Activated CD8-positive, alpha-beta T cell treated with anti-CD3 and anti-CD28 coated beads for 36 hours (primary cell): ENCODE measurements at regions of chr20 and their contacts with region 1.

Region 1: DNA sequence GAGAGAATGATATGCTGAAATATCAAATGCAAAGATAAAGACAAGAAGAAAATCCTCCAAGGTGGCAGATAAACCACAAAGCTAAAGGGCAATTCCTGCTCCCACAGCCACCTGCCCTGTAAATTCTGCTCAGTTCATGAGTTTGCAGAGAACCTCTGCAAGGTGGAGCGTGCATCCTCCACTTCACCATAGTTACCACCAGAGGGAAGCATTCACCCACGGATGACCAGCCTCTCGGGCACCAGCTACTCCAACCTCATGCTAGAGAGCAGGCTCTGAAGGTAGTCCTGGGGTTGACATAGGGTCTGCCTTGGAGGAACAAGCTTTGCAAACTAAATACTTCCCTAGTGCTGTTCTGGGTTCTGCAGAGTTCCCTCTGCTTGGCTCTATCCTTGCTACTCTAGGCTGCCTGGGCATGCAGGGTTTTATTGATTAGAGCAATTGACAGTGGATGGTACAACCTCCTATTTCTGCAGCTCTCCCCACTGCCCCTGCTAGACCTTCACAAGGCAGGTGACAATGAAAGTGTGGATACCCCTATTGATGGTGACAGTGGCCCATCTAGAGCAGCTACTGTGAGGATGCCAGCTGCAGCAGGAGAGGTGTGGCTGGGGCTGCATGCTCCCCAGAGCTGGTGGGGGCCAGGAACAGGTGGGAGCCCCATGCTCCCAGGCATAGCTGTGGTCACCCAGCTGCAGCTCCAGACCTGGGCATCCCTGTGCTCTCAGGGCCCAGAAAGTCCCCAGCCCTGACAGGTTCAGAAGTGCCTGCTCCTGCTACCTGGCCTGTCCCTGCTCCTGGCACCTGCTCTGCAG is 51.1 kb downstream of the GGTLC1 start:
- DNase-seq: peak; percentile 69
- ATAC-seq: peak; percentile 87
- H3K4me3 Mint-ChIP-seq: no peak overlapping the region
- H3K27ac Mint-ChIP-seq: no peak overlapping the region
- H3K4me1 Mint-ChIP-seq: no peaks in the 10 kb centered on the region
- H3K27me3 Mint-ChIP-seq: no peaks in the 10 kb centered on the region
- CTCF ChIP-seq: peak; percentile 75

Region 2: GRCh38 chr20:23954008-23954745 is 16.7 kb after region 1 on chr20:
- CTCF ChIA-PET with region 1: interaction called, 14 read pairs
- POLR2A ChIA-PET with region 1: no interaction called
- intact Hi-C with region 1: no loop called
- DNase-seq: no peak
- ATAC-seq: no peak
- H3K4me3 Mint-ChIP-seq: no peak overlapping the region
- H3K27ac Mint-ChIP-seq: no peak overlapping the region
- H3K4me1 Mint-ChIP-seq: no peaks in the 10 kb centered on the region
- H3K27me3 Mint-ChIP-seq: peaks cover 6% of the 10 kb centered on the region
- CTCF ChIP-seq: no peak

Region 3: GRCh38 chr20:24001712-24002405 is 64.3 kb after region 1 on chr20:
- CTCF ChIA-PET with region 1: interaction called, 16 read pairs
- POLR2A ChIA-PET with region 1: no interaction called
- intact Hi-C with region 1: no loop called
- DNase-seq: no peak
- ATAC-seq: no peak
- H3K4me3 Mint-ChIP-seq: no peak overlapping the region
- H3K27ac Mint-ChIP-seq: no peak overlapping the region
- H3K4me1 Mint-ChIP-seq: no peaks in the 10 kb centered on the region
- H3K27me3 Mint-ChIP-seq: peaks cover 3% of the 10 kb centered on the region
- CTCF ChIP-seq: no peak

Region 4: GRCh38 chr20:24100385-24101011 is 163.0 kb after region 1 on chr20:
- CTCF ChIA-PET with region 1: interaction called, 20 read pairs
- POLR2A ChIA-PET with region 1: no interaction called
- intact Hi-C with region 1: loop called (anchors 5 kb)
- DNase-seq: peak; percentile 77
- ATAC-seq: peak; percentile 97
- H3K4me3 Mint-ChIP-seq: no peak overlapping the region
- H3K27ac Mint-ChIP-seq: peak overlapping the region; percentile 60
- H3K4me1 Mint-ChIP-seq: peaks cover 20% of the 10 kb centered on the region
- H3K27me3 Mint-ChIP-seq: peaks cover 2% of the 10 kb centered on the region
- CTCF ChIP-seq: peak; percentile 72

Region 5: DNA sequence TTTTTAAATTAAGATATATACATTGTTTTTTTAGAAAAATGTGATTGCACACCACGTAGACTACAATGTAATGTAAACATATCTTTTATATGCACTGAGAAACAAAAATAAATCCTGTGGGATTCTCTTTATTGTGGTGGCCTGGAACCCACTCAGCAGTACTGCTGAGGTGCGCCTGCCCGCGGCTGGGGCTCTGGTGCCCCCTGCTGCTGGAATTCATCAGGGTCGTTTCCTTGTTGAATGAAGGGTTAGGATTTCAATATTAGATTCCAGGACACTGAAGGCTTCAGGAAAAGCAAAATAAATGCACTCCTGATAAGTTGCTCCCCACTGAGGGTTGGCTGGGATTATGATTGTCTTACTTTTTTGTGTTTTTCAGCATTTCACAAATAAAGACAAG is 226.8 kb after region 1 on chr20:
- CTCF ChIA-PET with region 1: interaction called, 13 read pairs
- POLR2A ChIA-PET with region 1: no interaction called
- intact Hi-C with region 1: loop called (anchors 5 kb)
- DNase-seq: peak; percentile 52
- ATAC-seq: no peak
- H3K4me3 Mint-ChIP-seq: no peak overlapping the region
- H3K27ac Mint-ChIP-seq: no peak overlapping the region
- H3K4me1 Mint-ChIP-seq: no peaks in the 10 kb centered on the region
- H3K27me3 Mint-ChIP-seq: no peaks in the 10 kb centered on the region
- CTCF ChIP-seq: peak; percentile 59